ENCODE measurements at regions of chr17 and their contacts with region 1.

Region 1: DNA sequence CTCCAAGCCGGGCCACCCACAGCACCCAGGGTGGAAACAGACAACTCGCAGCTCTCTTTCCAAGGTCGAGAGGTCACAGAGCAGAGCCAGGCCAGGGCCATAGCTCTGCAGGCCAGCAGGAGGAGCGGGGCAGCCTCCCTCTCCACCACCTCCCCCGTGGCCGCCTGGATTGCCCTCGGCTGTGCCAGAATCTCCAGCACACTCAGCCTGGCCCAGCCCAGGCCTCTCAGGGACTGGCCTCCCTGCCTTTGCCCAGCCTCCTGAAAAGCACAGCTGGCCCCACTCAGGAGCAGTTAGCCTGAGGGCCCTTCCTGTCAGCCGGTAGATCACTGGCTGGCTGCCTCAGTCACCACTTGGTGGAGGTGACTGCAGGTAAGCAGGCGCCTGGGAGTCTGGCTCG is 85.8 kb upstream of the SEC14L1 start:
- DNase-seq: no peak
- ATAC-seq: peak; percentile 31
- H3K4me3 Mint-ChIP-seq: no peak overlapping the region
- H3K27ac Mint-ChIP-seq: no peak overlapping the region
- H3K4me1 Mint-ChIP-seq: peaks cover 13% of the 10 kb centered on the region
- H3K27me3 Mint-ChIP-seq: no peaks in the 10 kb centered on the region
- CTCF ChIP-seq: no peak

Region 2: GRCh38 chr17:76841776-76842405 is 213.0 kb before region 1 on chr17:
- CTCF ChIA-PET with region 1: interaction called, 11 read pairs
- POLR2A ChIA-PET with region 1: no interaction called
- DNase-seq: peak; percentile 25
- ATAC-seq: peak; percentile 65
- H3K4me3 Mint-ChIP-seq: peak overlapping the region; percentile 56
- H3K27ac Mint-ChIP-seq: no peak overlapping the region
- H3K4me1 Mint-ChIP-seq: peaks cover 51% of the 10 kb centered on the region
- H3K27me3 Mint-ChIP-seq: peaks cover 33% of the 10 kb centered on the region
- CTCF ChIP-seq: no peak

Region 3: GRCh38 chr17:76879691-76880090 is 175.2 kb before region 1 on chr17:
- CTCF ChIA-PET with region 1: interaction called, 10 read pairs
- POLR2A ChIA-PET with region 1: no interaction called
- DNase-seq: no peak
- ATAC-seq: no peak
- H3K4me3 Mint-ChIP-seq: no peak overlapping the region
- H3K27ac Mint-ChIP-seq: peak overlapping the region; percentile 51
- H3K4me1 Mint-ChIP-seq: peaks cover 19% of the 10 kb centered on the region
- H3K27me3 Mint-ChIP-seq: no peaks in the 10 kb centered on the region
- CTCF ChIP-seq: no peak

Region 4: DNA sequence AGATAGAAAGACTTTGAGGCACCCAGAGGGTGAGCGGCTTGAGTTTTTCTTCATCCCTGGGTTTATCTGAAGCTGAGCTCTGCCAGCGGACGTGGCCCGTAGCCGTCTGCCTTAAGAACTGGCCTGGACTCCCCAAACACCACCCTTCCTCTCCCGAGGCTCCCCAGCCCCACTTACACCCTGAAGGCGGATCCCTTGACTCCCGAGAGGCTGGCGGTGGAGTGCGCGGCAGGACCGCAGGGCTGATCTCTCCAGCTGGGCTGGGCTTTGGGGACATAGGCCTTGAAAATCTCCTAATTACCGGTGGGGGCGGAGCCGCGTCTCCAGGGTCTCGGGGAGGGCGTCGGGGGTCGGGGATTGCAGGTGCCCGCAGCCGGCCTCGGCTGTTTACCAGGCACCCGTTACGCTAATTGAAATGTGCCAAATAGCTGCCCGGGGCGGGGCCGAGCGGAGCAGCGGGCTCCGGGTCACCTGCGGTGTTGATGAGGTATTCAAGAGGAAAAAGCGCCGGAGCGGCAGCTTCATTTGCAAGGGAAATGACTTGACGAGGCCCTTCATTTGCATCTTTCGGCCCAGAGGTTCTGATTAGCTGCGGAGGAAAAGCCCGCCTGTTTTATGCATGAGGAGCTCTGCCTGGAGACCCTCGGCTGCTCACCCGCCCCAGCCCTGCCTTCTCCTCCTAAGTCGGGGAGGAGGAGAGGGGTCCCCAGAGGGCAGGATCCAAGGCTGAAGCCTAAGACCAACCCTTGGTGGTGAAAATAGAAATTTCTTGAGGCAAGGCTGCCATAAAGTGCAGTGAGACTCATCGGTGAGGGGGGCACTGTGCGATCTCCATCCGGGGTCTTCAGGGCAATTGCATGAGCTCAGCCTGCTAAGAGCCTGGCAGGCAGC is 86.0 kb before region 1 on chr17:
- CTCF ChIA-PET with region 1: interaction called, 20 read pairs
- POLR2A ChIA-PET with region 1: interaction called, 5 read pairs
- DNase-seq: peak; percentile 96
- ATAC-seq: peak; percentile 85
- H3K4me3 Mint-ChIP-seq: peak overlapping the region; percentile 78
- H3K27ac Mint-ChIP-seq: peak overlapping the region; percentile 99
- H3K4me1 Mint-ChIP-seq: peaks cover 70% of the 10 kb centered on the region
- H3K27me3 Mint-ChIP-seq: no peaks in the 10 kb centered on the region; the same call in 1 of the 2 replicates
- CTCF ChIP-seq: no peak

Region 5: GRCh38 chr17:77011173-77012011 is 43.5 kb before region 1 on chr17:
- CTCF ChIA-PET with region 1: interaction called, 26 read pairs
- POLR2A ChIA-PET with region 1: no interaction called
- DNase-seq: peak; percentile 74
- ATAC-seq: no peak; the same call in 1 of the 2 replicates
- H3K4me3 Mint-ChIP-seq: no peak overlapping the region
- H3K27ac Mint-ChIP-seq: no peak overlapping the region
- H3K4me1 Mint-ChIP-seq: peaks cover 3% of the 10 kb centered on the region
- H3K27me3 Mint-ChIP-seq: no peaks in the 10 kb centered on the region; the same call in 1 of the 2 replicates
- CTCF ChIP-seq: peak; percentile 48

Region 6: DNA sequence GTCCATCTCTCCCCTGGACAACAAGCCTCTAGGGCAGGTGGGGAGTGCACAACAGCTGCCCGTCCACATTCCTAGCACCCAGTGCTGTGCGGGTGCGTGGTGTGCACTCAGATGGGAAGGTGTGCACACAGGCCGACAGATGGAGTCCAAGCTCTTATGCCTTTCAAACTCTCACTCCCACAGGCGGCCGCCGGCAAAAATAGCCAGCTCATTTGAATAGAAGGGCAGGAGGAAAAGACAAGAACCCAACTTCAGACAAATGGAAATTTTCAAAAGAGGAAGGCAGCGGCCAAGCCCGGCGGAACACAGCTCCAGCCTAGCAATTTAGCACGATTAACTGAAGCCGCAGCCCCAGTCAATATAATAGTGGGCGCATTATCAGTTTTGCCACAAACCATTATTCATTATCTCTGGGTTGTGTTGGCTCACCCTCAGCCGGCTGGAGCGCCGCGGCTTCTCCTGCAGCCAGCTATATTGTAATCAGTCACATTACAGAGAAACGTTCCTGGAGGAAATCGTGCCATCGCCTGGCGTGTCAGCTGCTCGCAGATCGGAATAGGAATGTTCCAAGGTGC is 18.0 kb before region 1 on chr17:
- CTCF ChIA-PET with region 1: interaction called, 33 read pairs
- POLR2A ChIA-PET with region 1: no interaction called
- DNase-seq: no peak
- ATAC-seq: no peak
- H3K4me3 Mint-ChIP-seq: no peak overlapping the region
- H3K27ac Mint-ChIP-seq: no peak overlapping the region
- H3K4me1 Mint-ChIP-seq: no peaks in the 10 kb centered on the region
- H3K27me3 Mint-ChIP-seq: no peaks in the 10 kb centered on the region; the same call in 1 of the 2 replicates
- CTCF ChIP-seq: no peak

Region 7: GRCh38 chr17:77076124-77076872 is 21.4 kb after region 1 on chr17:
- CTCF ChIA-PET with region 1: interaction called, 11 read pairs
- POLR2A ChIA-PET with region 1: no interaction called
- DNase-seq: no peak
- ATAC-seq: 0 out of 2 replicates have a peak, but pooled peaks have one; percentile 24
- H3K4me3 Mint-ChIP-seq: no peak overlapping the region
- H3K27ac Mint-ChIP-seq: 0 out of 2 replicates have a peak overlapping the region, but pooled peaks have one; percentile 17
- H3K4me1 Mint-ChIP-seq: peaks cover 12% of the 10 kb centered on the region
- H3K27me3 Mint-ChIP-seq: peaks cover 5% of the 10 kb centered on the region
- CTCF ChIP-seq: no peak

Region 8: GRCh38 chr17:77096570-77097214 is 41.8 kb after region 1 on chr17:
- CTCF ChIA-PET with region 1: no interaction called
- POLR2A ChIA-PET with region 1: no interaction called
- DNase-seq: no peak
- ATAC-seq: no peak
- H3K4me3 Mint-ChIP-seq: no peak overlapping the region
- H3K27ac Mint-ChIP-seq: peak overlapping the region; percentile 60
- H3K4me1 Mint-ChIP-seq: peaks cover 32% of the 10 kb centered on the region
- H3K27me3 Mint-ChIP-seq: no peaks in the 10 kb centered on the region
- CTCF ChIP-seq: no peak